A673 (cell line): ENCODE measurements at regions of chr3 and their contacts with region 1.

Region 1: DNA sequence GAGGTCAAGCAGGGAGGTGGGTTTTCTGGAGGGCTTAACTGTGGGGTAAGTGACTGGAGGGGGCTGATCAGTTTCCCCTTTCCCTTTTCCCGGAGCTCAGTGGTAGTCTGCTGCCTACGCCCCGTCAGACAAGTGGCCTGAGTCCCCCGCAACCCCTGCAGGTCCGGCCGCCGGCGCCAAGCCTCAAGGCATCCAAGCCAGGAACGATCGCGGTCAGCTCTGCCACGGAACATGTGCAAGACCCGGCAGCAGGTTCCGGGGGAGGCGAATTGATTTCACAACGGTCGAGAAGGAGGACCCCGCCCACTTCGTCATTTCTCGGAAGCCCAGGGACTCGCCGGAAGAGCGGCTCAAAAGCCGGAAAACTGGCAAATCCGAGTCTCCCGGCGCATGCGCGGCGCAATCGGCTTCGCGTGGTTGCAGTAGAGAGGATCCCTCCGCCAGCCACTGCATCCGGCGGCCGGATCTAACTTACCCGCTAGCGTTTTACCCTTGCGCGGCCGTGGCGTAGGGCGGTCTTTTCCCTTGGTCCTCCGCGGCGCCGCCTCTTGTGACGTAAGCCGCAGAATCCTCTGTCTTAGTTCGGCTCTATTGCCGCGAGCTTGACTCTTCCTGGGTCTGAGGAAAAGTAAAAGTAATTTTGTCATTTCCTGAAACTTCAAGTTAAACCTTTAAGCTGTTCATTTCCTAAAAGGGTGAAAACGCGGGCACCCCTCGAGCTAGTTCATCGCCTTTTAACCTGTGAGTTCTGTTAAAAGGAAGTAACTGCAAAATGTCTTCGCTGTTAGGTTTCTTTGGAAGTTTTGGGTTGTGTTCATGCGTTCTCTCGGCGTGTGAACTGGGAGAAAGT is 14.9 kb upstream of the CCNL1 start:
- DNase-seq: peak; percentile 100
- H3K4me3 ChIP-seq: peak overlapping the region; percentile 61
- H3K27ac ChIP-seq: peak overlapping the region; percentile 94
- H3K4me1 ChIP-seq: peaks cover 9% of the 10 kb centered on the region
- H3K27me3 ChIP-seq: no peaks in the 10 kb centered on the region
- CTCF ChIP-seq: no peak

Region 2: GRCh38 chr3:157023226-157023625 is 151.6 kb before region 1 on chr3:
- CTCF ChIA-PET with region 1: no interaction called
- POLR2A ChIA-PET with region 1: no interaction called
- intact Hi-C with region 1: no loop called
- DNase-seq: no peak
- H3K4me3 ChIP-seq: no peak overlapping the region
- H3K27ac ChIP-seq: no peak overlapping the region
- H3K4me1 ChIP-seq: no peaks in the 10 kb centered on the region
- H3K27me3 ChIP-seq: no peaks in the 10 kb centered on the region
- CTCF ChIP-seq: no peak

Region 3: GRCh38 chr3:157159762-157160657 is 14.9 kb before region 1 on chr3 and contains the start of gene CCNL1:
- CTCF ChIA-PET with region 1: no interaction called
- POLR2A ChIA-PET with region 1: interaction called, 21 read pairs
- intact Hi-C with region 1: loop called (anchors 1 kb)
- DNase-seq: peak; percentile 98
- H3K4me3 ChIP-seq: peak within 1 kb of the TSS; percentile 84
- H3K27ac ChIP-seq: peak within 1 kb of the TSS; percentile 97
- H3K4me1 ChIP-seq: peaks cover 45% of the 10 kb centered on the region
- H3K27me3 ChIP-seq: no peaks in the 10 kb centered on the region
- CTCF ChIP-seq: no peak
- total RNA-seq, gene CCNL1: 91.0 and 101 TPM in 2 replicates

Region 4: GRCh38 chr3:157190388-157190872 is 15.6 kb after region 1 on chr3:
- CTCF ChIA-PET with region 1: no interaction called
- POLR2A ChIA-PET with region 1: no interaction called
- intact Hi-C with region 1: loop called (anchors 1 kb)
- DNase-seq: peak; percentile 83
- H3K4me3 ChIP-seq: no peak overlapping the region
- H3K27ac ChIP-seq: no peak overlapping the region
- H3K4me1 ChIP-seq: no peaks in the 10 kb centered on the region
- H3K27me3 ChIP-seq: no peaks in the 10 kb centered on the region
- CTCF ChIP-seq: no peak